CD4-positive, alpha-beta T cell (primary cell): ENCODE measurements at regions of chr17 and their contacts with region 1.

Region 1: GRCh38 chr17:75487351-75488070 is 27.8 kb downstream of the CASKIN2 start:
- DNase-seq: peak in 13 of 14 experiments; percentile 6 to 81 (median 51)
- ATAC-seq: peak; percentile 96
- H3K4me3 ChIP-seq: peak overlapping the region; percentile 20
- H3K4me3 Mint-ChIP-seq: peak overlapping the region; percentile 76
- H3K27ac ChIP-seq: peak overlapping the region; percentile 55 to 65
- H3K27ac Mint-ChIP-seq: peak overlapping the region; percentile 95
- H3K4me1 ChIP-seq: peaks cover 30% of the 10 kb centered on the region
- H3K4me1 Mint-ChIP-seq: peaks cover 26% of the 10 kb centered on the region
- H3K27me3 ChIP-seq: no peaks in the 10 kb centered on the region
- H3K27me3 Mint-ChIP-seq: no peaks in the 10 kb centered on the region
- CTCF ChIP-seq: no peak

Region 2: DNA sequence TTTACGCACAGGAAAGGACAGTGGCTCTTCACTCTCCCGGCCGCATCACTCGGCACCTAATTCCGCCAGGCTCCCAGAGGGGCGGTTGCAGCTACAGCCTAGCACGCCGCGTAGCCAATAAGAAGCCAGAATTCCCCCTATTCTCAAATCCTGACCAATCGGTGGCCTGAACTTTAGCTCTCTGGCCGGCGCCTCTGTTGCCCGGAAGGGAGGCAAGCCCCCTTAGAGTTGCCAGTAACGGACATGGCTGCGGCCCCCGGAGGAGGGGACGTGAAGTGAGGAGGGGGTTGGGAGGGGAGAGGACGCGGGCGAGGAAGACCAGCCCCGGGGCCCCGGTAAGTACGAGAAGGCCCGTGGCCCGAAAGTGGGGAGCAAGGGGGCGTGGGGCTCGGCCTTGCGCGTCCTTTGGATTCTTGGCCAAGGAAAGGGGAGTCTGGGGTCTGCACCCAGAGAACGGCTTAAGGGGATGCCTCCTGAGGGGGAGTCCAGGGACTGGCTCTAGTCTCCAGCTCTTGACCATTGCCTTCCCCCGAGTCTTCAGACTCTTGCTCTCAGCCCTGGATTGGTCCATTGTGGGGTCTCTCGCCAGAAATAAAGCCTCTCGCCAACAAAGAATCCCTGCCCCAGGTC is 31.0 kb before region 1 on chr17 and contains the start of gene TMEM94:
- CTCF ChIA-PET with region 1: no interaction called
- POLR2A ChIA-PET with region 1: interaction called, 32 read pairs
- intact Hi-C with region 1: no loop called
- DNase-seq: peak; percentile 79 to 97 (median 88)
- ATAC-seq: peak; percentile 96
- H3K4me3 ChIP-seq: peak within 1 kb of the TSS; percentile 70
- H3K4me3 Mint-ChIP-seq: peak within 1 kb of the TSS; percentile 100
- H3K27ac ChIP-seq: peak within 1 kb of the TSS; percentile 23 to 59
- H3K27ac Mint-ChIP-seq: peak within 1 kb of the TSS; percentile 91
- H3K4me1 ChIP-seq: peaks cover 17% of the 10 kb centered on the region
- H3K4me1 Mint-ChIP-seq: peaks cover 29% of the 10 kb centered on the region
- H3K27me3 ChIP-seq: no peaks in the 10 kb centered on the region
- H3K27me3 Mint-ChIP-seq: no peaks in the 10 kb centered on the region
- CTCF ChIP-seq: no peak
- total RNA-seq, gene TMEM94: 52.8 to 57.3 TPM